ENCODE measurements at regions of chr16 and their contacts with region 1.

Region 1: GRCh38 chr16:2155091-2156021 is at the start of gene TRAF7:
- DNase-seq: peak; percentile 99
- H3K4me3 Mint-ChIP-seq: peak within 1 kb of the TSS; percentile 92
- H3K27ac Mint-ChIP-seq: peak within 1 kb of the TSS; percentile 94
- H3K4me1 Mint-ChIP-seq: peaks cover 28% of the 10 kb centered on the region
- H3K27me3 Mint-ChIP-seq: no peaks in the 10 kb centered on the region
- total RNA-seq, gene TRAF7: 68.7 and 80.3 TPM in 2 replicates

Region 2: DNA sequence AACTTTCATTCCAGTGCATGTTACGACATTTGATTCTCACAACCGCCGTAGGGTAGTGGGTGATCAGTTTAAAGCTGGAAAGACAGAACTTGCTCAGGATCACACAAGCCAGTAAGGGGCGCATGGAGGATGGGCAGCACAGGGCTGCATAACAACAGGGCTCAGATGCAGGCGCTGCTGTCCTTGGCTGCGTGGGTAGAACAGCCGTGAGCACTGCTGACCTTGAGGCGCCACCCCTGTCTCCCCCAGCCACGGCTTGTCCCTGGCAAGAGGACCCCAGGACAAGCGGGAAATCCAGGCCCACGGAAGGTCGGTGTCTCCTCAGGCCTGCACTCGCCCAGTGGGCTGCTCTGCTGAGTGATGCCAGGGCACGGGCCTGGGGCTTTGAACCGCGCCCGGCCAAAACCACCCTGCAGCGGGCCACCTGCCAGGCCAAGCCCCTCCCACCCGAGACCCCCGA is 1269.2 kb before region 1 on chr16:
- intact Hi-C with region 1: no loop called
- DNase-seq: no peak
- H3K4me3 Mint-ChIP-seq: no peak overlapping the region
- H3K27ac Mint-ChIP-seq: no peak overlapping the region
- H3K4me1 Mint-ChIP-seq: no peaks in the 10 kb centered on the region
- H3K27me3 Mint-ChIP-seq: no peaks in the 10 kb centered on the region

Region 3: DNA sequence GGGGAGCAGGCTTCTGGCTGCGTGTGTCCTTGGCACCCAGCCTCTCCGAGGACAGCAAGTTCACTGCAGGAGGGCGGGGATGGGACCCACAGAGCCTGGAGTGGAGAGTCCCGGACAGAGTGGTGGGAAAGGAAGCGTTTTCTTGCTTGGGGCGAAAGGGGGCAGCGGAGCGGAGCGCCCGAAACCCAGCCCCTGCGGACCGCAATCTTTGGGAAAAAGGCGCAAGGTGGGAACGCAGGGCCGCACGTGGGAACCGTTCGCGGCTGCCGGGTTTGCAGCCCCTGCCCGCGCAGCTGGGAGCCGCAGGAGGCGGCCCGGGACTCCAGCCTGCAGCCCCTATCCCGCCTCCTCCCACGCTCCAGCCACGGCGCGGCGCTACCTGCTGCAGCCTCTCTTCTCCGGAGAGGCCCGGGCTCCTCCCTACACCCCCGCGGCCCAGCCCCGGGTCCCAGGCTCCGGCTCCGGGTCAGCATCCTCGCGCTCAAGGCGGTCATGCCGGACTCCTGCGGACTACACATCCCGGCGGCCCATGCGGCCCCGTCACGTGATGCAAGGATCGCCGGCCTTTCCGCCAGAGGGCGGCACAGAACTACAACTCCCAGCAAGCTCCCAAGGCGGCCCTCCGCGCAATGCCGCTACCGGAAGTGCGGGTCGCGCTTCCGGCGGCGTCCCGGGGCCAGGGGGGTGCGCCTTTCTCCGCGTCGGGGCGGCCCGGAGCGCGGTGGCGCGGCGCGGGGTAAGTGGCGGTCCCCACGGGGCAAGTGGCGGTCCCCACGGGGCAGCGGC is 107.8 kb before region 1 on chr16 and contains the starts of genes NTHL1 and TSC2:
- intact Hi-C with region 1: loop called (anchors 1 kb)
- DNase-seq: peak; percentile 99
- H3K4me3 Mint-ChIP-seq: peak within 1 kb of the TSS; percentile 92
- H3K27ac Mint-ChIP-seq: peak within 1 kb of the TSS; percentile 83
- H3K4me1 Mint-ChIP-seq: peaks cover 14% of the 10 kb centered on the region
- H3K27me3 Mint-ChIP-seq: no peaks in the 10 kb centered on the region
- total RNA-seq, gene NTHL1: 50.3 and 57.7 TPM in 2 replicates
- total RNA-seq, gene TSC2: 98.8 and 99.8 TPM in 2 replicates

Region 4: GRCh38 chr16:2223375-2224182 is 68.2 kb after region 1 on chr16 and contains the start of gene E4F1:
- intact Hi-C with region 1: loop called (anchors 1 kb)
- DNase-seq: peak; percentile 100
- H3K4me3 Mint-ChIP-seq: peak within 1 kb of the TSS; percentile 85
- H3K27ac Mint-ChIP-seq: peak within 1 kb of the TSS; percentile 79
- H3K4me1 Mint-ChIP-seq: peaks cover 13% of the 10 kb centered on the region
- H3K27me3 Mint-ChIP-seq: no peaks in the 10 kb centered on the region
- total RNA-seq, gene E4F1: 33.4 and 34.7 TPM in 2 replicates

Region 5: GRCh38 chr16:2267913-2268666 is 112.7 kb after region 1 on chr16 and contains the start of gene RNPS1:
- intact Hi-C with region 1: loop called (anchors 1 kb)
- DNase-seq: peak; percentile 99
- H3K4me3 Mint-ChIP-seq: peak within 1 kb of the TSS; percentile 94
- H3K27ac Mint-ChIP-seq: peak within 1 kb of the TSS; percentile 97
- H3K4me1 Mint-ChIP-seq: peaks cover 27% of the 10 kb centered on the region
- H3K27me3 Mint-ChIP-seq: peaks cover 1% of the 10 kb centered on the region
- total RNA-seq, gene RNPS1: 399 and 416 TPM in 2 replicates

Region 6: DNA sequence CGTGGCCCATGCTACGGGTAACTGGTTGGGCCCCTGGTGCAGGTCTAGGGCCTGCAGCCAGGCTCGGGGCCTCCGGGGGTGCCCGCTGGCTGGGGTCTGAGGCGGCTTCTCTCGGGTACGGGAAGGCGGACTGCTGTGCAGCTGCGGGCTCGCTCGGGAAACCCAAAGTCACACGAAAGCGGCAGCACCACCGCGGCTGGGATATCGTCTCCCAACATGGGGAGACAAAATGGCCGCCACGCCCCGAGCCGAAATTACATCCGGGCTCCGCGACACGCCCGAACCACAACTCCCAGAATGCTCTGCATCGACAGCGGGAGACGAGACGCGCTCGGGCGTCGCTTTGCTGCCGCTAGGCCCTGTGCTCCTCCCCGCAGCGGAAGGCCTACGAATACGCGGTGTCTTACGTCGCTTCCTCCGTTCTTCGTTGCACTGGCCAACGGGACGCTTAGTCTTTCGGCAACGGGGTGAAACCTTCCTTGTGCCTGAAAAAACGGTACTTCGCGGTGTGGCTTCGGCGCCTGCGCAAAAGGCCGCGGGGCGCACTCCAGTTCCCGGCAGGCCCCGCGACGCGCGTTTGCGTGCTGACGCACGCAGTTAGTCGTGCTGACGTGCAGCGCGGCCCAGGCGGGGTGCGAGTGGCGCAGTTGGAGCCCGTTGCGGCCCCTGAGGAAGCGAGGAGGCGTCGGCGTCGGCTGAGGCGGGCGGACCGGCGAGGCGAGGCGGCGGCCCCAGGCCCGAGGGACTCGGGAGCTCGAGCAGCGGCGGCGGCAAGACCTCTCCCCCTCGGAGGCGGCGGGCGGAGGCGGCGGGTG is 596.9 kb after region 1 on chr16 and contains the start of gene SRRM2:
- intact Hi-C with region 1: loop called (anchors 5 kb)
- DNase-seq: peak; percentile 99
- H3K4me3 Mint-ChIP-seq: peak within 1 kb of the TSS; percentile 90
- H3K27ac Mint-ChIP-seq: peak within 1 kb of the TSS; percentile 99
- H3K4me1 Mint-ChIP-seq: peaks cover 53% of the 10 kb centered on the region
- H3K27me3 Mint-ChIP-seq: no peaks in the 10 kb centered on the region
- total RNA-seq, gene SRRM2: 635 and 680 TPM in 2 replicates

Measured in activated CD4-positive, alpha-beta T cell treated with anti-CD3 and anti-CD28 coated beads, Interleukin-2, amount 10 ng/mL, durations not matched to agents 24 days and 14 days (primary cell).